Ovary (tissue), 10 donors: ENCODE measurements at regions of chr5 and their contacts with region 1.

Region 1: GRCh38 chr5:151002250-151002649 is 18.1 kb upstream of the GPX3 start:
- DNase-seq: peak in 1 of 5 donors; percentile 60
- H3K4me3 ChIP-seq: no peak overlapping the region
- H3K27ac ChIP-seq: no peak overlapping the region
- H3K4me1 ChIP-seq: peaks cover 24% of the 10 kb centered on the region
- H3K27me3 ChIP-seq: no peaks in the 10 kb centered on the region
- CTCF ChIP-seq: peak; percentile 58 to 85 (median 84)
- EP300 ChIP-seq: no peak
- POLR2A ChIP-seq: no peak

Region 2: DNA sequence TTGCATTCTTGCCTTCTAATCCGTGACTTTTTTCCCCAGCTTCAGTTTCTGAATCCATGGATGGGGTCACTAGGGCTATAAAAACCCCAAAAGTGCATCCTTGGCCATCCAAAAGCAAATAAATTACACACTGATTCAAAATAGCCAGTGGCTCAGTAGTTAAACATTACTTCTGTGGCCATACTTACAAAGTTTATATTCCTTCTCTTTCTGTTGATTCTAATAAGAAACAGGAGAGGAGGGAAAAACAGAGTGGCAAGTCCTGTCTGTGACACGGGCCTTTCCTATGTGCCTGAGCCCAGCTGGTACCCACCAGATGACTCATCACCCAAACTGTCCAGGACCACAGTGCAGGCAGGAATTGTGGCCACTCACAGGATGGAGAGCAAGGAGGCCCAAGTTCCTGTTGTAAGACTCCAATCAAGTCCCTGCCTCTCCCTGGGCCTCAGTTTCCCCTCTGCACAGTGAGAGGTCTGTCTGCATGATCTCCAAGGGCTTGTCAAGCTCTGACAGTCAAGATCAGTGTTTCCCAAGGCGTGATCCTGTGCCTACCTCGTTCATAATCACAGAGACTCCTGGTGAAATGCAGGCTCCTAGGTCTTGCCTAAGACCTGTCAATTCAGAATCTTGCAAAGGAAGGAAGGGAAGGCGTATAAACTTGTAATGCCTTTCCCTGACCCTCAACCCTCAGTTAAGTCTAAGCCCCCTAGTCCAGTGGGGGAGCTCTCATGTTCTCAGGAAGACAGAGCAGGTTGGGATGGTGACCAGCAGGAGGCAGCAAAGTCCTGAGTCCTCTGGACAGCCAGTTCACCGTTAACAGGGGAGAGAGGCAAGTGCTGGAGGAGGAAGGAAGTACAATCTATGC is 49.0 kb after region 1 on chr5:
- intact Hi-C with region 1: loop called in 3 of 4 experiments (anchors 2 to 5 kb)
- DNase-seq: peak; percentile 81 to 90 (median 87)
- H3K4me3 ChIP-seq: no peak overlapping the region
- H3K27ac ChIP-seq: no peak overlapping the region
- H3K4me1 ChIP-seq: no peaks in the 10 kb centered on the region
- H3K27me3 ChIP-seq: no peaks in the 10 kb centered on the region
- CTCF ChIP-seq: peak; percentile 70 to 95 (median 81)
- EP300 ChIP-seq: no peak
- POLR2A ChIP-seq: no peak

Region 3: DNA sequence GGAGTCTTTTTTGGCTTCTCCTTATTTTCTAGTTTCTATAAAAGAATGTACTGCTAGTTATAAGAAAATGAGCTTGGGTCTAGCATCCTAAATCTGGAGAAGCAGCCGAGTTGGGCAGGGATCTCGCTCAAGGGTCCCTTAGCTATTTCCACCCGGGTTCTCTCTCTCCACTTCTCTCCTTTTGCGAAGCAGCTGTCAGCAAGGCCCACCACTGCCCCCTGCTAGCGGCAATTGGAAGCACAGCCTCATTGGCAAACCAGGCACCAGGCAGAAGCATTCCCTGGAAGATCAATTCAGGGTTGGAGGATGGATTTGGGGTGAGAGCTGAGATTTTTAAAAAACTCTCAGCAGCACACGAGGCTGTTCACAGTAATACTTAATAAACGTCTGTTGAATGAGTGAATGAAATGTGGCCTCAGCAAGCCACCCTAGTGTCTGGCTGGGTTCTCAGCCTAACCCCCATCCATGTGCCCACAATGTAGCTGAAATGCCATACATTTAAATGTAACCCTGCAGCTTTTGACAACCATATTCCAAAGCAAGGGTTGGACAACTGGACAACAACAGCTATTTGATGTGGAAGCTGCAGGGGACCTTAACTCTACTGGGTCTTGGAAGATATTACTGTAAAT is 113.1 kb after region 1 on chr5:
- intact Hi-C with region 1: loop called in 3 of 4 experiments (anchors 5 kb)
- DNase-seq: peak; percentile 65 to 86 (median 83)
- H3K4me3 ChIP-seq: no peak overlapping the region
- H3K27ac ChIP-seq: no peak overlapping the region
- H3K4me1 ChIP-seq: no peaks in the 10 kb centered on the region
- H3K27me3 ChIP-seq: no peaks in the 10 kb centered on the region
- CTCF ChIP-seq: peak; percentile 76 to 95 (median 86)
- EP300 ChIP-seq: no peak
- POLR2A ChIP-seq: peak; percentile 23

Region 4: DNA sequence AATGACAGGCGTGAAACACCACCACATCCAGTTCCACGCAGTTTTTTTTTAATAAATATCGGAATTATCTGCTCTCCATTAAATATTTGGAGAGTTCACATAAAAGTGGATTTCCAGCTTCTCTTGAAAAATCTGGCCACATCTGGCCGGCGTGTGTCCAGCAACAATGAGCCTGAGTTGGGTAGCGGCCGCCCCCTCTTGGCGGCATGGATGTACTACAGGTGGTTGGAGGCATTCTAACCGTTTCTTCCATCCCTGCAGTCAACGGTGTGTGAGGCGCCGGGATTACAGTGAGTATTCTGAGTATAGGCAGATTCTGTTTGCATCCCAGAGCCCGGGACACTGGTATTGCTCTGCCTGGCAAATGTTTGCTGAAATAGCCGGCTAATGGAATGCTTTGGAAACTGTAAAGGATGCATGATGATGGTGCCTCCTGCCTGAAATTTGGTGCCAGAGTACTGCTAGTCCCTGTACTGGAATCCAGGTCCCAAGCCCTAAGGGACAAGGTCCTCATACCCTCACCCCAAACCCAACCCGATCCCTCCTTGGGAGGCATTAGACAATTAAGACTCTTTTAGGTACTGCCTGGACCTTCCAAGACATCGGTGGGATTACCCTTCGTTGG is 237.1 kb after region 1 on chr5:
- intact Hi-C with region 1: loop called in 1 of 4 experiments (anchors 5 kb)
- DNase-seq: peak; percentile 81 to 91 (median 89)
- H3K4me3 ChIP-seq: peak overlapping the region; percentile 27
- H3K27ac ChIP-seq: peak overlapping the region in 1 of 2 donors; percentile 52
- H3K4me1 ChIP-seq: peaks cover 7% of the 10 kb centered on the region
- H3K27me3 ChIP-seq: no peaks in the 10 kb centered on the region
- CTCF ChIP-seq: peak; percentile 61 to 85 (median 78)
- EP300 ChIP-seq: no peak
- POLR2A ChIP-seq: no peak